ENCODE measurements at regions of chr9 and their contacts with region 1.

Region 1: GRCh38 chr9:34126207-34127034 is at the start of gene DCAF12:
- DNase-seq: peak; percentile 98
- H3K4me3 ChIP-seq: peak within 1 kb of the TSS; percentile 84 to 98 (median 85)
- H3K27ac ChIP-seq: peak within 1 kb of the TSS; percentile 91 to 94 (median 91)
- H3K4me1 ChIP-seq: peaks cover 36 to 48% (median 45%) of the 10 kb centered on the region in 4 donors
- H3K27me3 ChIP-seq: no peaks in the 10 kb centered on the region
- CTCF ChIP-seq: peak in 1 of 3 experiments; percentile 27
- EP300 ChIP-seq: no peak
- POLR2A ChIP-seq: peak; percentile 53
- total RNA-seq, gene DCAF12: 17.9 to 25.0 (median 21.9) TPM

Region 2: GRCh38 chr9:34252670-34253459 is 126.4 kb after region 1 on chr9:
- intact Hi-C with region 1: loop called (anchors 2 kb)
- DNase-seq: no peak
- H3K4me3 ChIP-seq: no peak overlapping the region
- H3K27ac ChIP-seq: peak overlapping the region; percentile 70 to 86 (median 83)
- H3K4me1 ChIP-seq: peaks cover 54 to 91% (median 70%) of the 10 kb centered on the region in 4 donors
- H3K27me3 ChIP-seq: no peaks in the 10 kb centered on the region
- CTCF ChIP-seq: peak; percentile 92 to 95 (median 93)
- EP300 ChIP-seq: no peak
- POLR2A ChIP-seq: no peak

Measured in esophagus muscularis mucosa (tissue), 4 donors.